PC-9 (cell line): ENCODE measurements at regions of chr11 and their contacts with region 1.

Region 1: GRCh38 chr11:118263695-118264567 is at the start of gene MPZL2:
- DNase-seq: peak; percentile 86 to 94
- H3K4me3 ChIP-seq: peak within 1 kb of the TSS; percentile 86
- H3K27ac ChIP-seq: peak within 1 kb of the TSS; percentile 95
- H3K4me1 ChIP-seq: peaks cover 40% of the 10 kb centered on the region
- H3K27me3 ChIP-seq: no peaks in the 10 kb centered on the region
- CTCF ChIP-seq: no peak; the same call in 1 of the 2 replicates
- total RNA-seq, gene MPZL2: 39.4 and 43.1 TPM in 2 replicates

Region 2: DNA sequence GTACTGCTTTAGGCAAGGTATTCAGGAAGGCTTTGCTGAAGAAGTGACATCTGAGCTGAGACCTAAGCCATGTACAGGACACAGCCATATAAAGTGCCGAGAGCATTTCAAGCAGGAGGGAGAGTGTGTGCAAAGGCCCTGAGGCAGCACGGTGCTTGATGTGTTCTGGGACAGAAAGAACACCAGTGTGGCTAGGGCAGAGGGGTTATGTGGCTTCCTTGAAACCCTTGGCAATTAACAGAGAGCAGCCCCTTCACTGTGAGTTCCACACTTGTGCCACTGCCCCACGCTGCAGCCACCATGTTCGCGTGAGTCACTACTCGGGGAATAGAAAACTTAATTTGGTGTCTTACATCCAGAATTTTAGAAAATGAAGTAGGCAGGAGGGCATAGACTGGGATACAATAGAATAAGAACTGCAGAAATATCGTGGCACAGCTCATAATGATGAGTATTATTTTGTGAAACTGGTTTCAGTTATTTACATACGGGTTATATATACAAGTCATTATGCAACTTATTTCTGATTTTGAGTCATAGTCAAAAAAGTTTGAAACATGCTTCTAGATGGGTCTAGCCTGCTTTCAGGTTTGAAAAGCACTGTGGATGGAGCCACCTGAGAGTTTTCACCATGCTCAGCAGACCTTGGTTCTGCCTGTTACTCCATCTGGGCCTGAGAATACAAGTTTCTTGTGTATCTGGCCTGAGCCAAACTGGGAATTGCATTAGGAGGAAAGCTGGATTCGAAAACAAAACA is 265.9 kb before region 1 on chr11:
- CTCF ChIA-PET with region 1: no interaction called
- POLR2A ChIA-PET with region 1: no interaction called
- intact Hi-C with region 1: no loop called
- DNase-seq: no peak
- H3K4me3 ChIP-seq: no peak overlapping the region
- H3K27ac ChIP-seq: no peak overlapping the region
- H3K4me1 ChIP-seq: no peaks in the 10 kb centered on the region
- H3K27me3 ChIP-seq: peaks cover 13% of the 10 kb centered on the region; the same call in 1 of the 2 replicates
- CTCF ChIP-seq: no peak

Region 3: DNA sequence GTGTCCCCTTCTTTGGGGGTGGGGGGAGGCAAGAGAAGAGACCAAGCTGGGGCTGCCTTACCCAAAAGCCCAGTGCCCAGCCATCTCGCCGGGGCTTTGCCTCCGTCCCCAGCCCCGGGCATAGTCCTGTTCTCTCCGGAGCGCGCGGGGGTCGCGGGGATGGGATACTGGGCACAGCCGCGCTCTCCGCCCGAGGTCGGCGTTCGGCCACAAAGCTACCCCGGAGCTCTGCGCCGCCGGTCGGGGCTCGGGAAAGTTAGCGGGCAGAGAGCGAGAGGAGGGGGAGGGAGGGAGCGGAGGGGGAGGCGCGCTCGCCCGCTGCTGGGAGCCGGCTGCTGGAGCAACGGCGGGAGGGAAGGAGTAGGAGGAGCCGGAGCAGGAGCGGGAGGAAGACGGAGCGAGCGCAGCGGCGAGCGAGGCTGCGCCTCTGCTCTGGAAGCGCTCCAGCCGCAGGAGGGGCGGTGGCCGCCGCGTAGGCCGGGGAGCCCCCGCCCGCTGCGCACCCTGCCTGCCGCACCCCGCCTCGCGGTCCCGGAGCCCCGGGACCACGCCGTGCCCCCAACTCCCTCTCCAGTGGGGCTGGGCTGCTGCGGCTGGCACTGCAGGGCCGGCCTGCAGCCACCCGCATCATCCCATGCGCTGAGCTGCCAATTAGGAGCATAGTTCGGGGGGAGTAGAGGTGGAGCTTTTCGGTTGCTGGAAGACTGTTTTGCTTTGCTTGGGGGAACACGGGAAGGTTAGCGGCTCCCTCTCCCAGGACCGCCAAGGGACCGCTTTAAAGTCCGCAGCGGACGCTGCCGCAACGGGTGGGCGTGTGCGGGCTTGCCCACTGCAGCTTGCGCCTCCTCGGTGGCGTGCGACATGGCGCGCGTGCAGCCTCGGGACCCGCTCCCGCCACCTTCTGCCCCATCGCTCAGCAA is 111.1 kb before region 1 on chr11 and contains the start of gene SCN4B:
- CTCF ChIA-PET with region 1: interaction called, 12 read pairs
- POLR2A ChIA-PET with region 1: no interaction called
- intact Hi-C with region 1: no loop called
- DNase-seq: peak in 1 of 2 experiments; percentile 41
- H3K4me3 ChIP-seq: no peak within 1 kb of the TSS
- H3K27ac ChIP-seq: no peak within 1 kb of the TSS
- H3K4me1 ChIP-seq: no peaks in the 10 kb centered on the region; the same call in 1 of the 2 replicates
- H3K27me3 ChIP-seq: peaks cover 79% of the 10 kb centered on the region
- CTCF ChIP-seq: no peak
- total RNA-seq, gene SCN4B: 0.08 TPM in 1 of 2 replicates, not detected in the other

Region 4: GRCh38 chr11:118198370-118198769 is 65.6 kb before region 1 on chr11:
- CTCF ChIA-PET with region 1: interaction called, 13 read pairs
- POLR2A ChIA-PET with region 1: no interaction called
- intact Hi-C with region 1: loop called (anchors 1 kb)
- DNase-seq: peak in 1 of 2 experiments; percentile 74
- H3K4me3 ChIP-seq: peak overlapping the region; percentile 44; the same call in 1 of the 2 replicates
- H3K27ac ChIP-seq: no peak overlapping the region
- H3K4me1 ChIP-seq: peaks cover 16% of the 10 kb centered on the region
- H3K27me3 ChIP-seq: no peaks in the 10 kb centered on the region
- CTCF ChIP-seq: peak; percentile 98

Region 5: GRCh38 chr11:118251858-118252652 is 11.9 kb before region 1 on chr11 and contains the start of gene MPZL3:
- CTCF ChIA-PET with region 1: no interaction called
- POLR2A ChIA-PET with region 1: interaction called, 11 read pairs
- intact Hi-C with region 1: no loop called
- DNase-seq: peak; percentile 86 to 99
- H3K4me3 ChIP-seq: peak within 1 kb of the TSS; percentile 72
- H3K27ac ChIP-seq: peak within 1 kb of the TSS; percentile 88
- H3K4me1 ChIP-seq: peaks cover 32% of the 10 kb centered on the region
- H3K27me3 ChIP-seq: no peaks in the 10 kb centered on the region
- CTCF ChIP-seq: 0 out of 2 replicates have a peak, but pooled peaks have one; percentile 2
- total RNA-seq, gene MPZL3: 13.4 and 16.8 TPM in 2 replicates

Region 6: DNA sequence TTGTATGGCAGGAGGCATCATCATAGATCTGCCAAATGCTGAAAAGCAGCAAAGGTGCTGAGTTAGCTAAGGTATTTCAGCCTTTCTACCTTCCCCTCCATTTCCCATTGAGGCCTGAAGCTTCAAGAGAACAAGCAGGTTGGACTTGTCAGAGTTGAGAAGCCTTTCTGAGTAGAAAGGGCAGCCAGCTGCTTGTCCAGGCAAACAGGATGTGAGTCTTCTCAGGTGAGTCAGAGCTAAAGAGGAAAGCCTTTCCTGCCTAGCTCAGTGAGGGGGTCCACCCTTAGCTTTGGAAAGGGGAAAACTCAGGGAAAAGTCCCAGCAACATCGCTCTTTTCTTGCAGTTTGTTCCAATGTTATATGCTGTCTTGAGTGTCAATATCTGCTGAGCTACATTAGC is 13.4 kb after region 1 on chr11:
- CTCF ChIA-PET with region 1: interaction called, 7 read pairs
- POLR2A ChIA-PET with region 1: interaction called, 7 read pairs
- intact Hi-C with region 1: loop called (anchors 1 kb)
- DNase-seq: peak; percentile 65 to 99
- H3K4me3 ChIP-seq: no peak overlapping the region; the same call in 1 of the 2 replicates
- H3K27ac ChIP-seq: peak overlapping the region; percentile 80
- H3K4me1 ChIP-seq: peaks cover 47% of the 10 kb centered on the region
- H3K27me3 ChIP-seq: no peaks in the 10 kb centered on the region
- CTCF ChIP-seq: no peak

Region 7: GRCh38 chr11:118290923-118291322 is 27.0 kb after region 1 on chr11:
- CTCF ChIA-PET with region 1: no interaction called
- POLR2A ChIA-PET with region 1: interaction called, 5 read pairs
- intact Hi-C with region 1: loop called (anchors 1 kb)
- DNase-seq: peak; percentile 43 to 65
- H3K4me3 ChIP-seq: no peak overlapping the region
- H3K27ac ChIP-seq: no peak overlapping the region
- H3K4me1 ChIP-seq: peaks cover 33% of the 10 kb centered on the region
- H3K27me3 ChIP-seq: no peaks in the 10 kb centered on the region
- CTCF ChIP-seq: peak; percentile 68

Region 8: DNA sequence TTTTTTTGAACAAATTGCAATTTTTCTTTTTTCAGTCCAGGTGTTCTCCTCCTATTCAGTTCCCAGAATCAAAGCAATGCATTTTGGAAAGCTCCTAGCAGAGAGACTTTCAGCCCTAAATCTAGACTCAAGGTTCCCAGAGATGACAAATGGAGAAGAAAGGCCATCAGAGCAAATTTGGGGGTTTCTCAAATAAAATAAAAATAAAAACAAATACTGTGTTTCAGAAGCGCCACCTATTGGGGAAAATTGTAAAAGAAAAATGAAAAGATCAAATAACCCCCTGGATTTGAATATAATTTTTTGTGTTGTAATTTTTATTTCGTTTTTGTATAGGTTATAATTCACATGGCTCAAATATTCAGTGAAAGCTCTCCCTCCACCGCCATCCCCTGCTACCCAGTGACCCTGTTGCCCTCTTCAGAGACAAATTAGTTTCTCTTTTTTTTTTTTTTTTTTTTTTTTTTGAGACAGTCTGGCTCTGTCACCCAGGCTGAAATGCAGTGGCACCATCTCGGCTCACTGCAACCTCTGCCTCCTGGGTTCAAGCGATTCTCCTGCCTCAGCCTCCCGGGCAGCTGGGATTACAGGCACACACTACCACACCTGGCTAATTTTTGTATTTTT is 89.3 kb after region 1 on chr11:
- CTCF ChIA-PET with region 1: no interaction called
- POLR2A ChIA-PET with region 1: no interaction called
- intact Hi-C with region 1: loop called (anchors 5 kb)
- DNase-seq: no peak
- H3K4me3 ChIP-seq: no peak overlapping the region
- H3K27ac ChIP-seq: no peak overlapping the region
- H3K4me1 ChIP-seq: peaks cover 21% of the 10 kb centered on the region
- H3K27me3 ChIP-seq: no peaks in the 10 kb centered on the region
- CTCF ChIP-seq: peak; percentile 86